Mammary epithelial cell (primary cell): ENCODE measurements at regions of chr17 and their contacts with region 1.

Region 1: GRCh38 chr17:42798383-42799380 is at the starts of genes CNTD1 and COA3:
- DNase-seq: peak; percentile 76
- H3K4me3 ChIP-seq: peak within 1 kb of the TSS; percentile 92 to 96 (median 93)
- H3K27ac ChIP-seq: no peak within 1 kb of the TSS
- H3K4me1 ChIP-seq: peaks cover 11% of the 10 kb centered on the region
- H3K27me3 ChIP-seq: no peaks in the 10 kb centered on the region
- CTCF ChIP-seq: peak in 1 of 2 donors; percentile 16
- total RNA-seq, gene CNTD1: under 0.01 TPM in 1 of 2 donors, not detected in the other
- total RNA-seq, gene COA3: 31.5 to 49.1 TPM

Region 2: GRCh38 chr17:42720996-42721583 is 77.6 kb before region 1 on chr17:
- CTCF ChIA-PET with region 1: no interaction called
- dilution Hi-C with region 1: no loop called
- in situ Hi-C with region 1: no loop called
- intact Hi-C with region 1: no loop called
- DNase-seq: peak; percentile 43
- H3K4me3 ChIP-seq: no peak overlapping the region
- H3K27ac ChIP-seq: no peak overlapping the region
- H3K4me1 ChIP-seq: no peaks in the 10 kb centered on the region
- H3K27me3 ChIP-seq: no peaks in the 10 kb centered on the region
- CTCF ChIP-seq: peak; percentile 59 to 65

Region 3: GRCh38 chr17:42773290-42774035 is 25.2 kb before region 1 on chr17 and contains the start of gene VPS25:
- CTCF ChIA-PET with region 1: no interaction called
- dilution Hi-C with region 1: no loop called
- in situ Hi-C with region 1: no loop called
- intact Hi-C with region 1: loop called (anchors 1 kb)
- DNase-seq: peak; percentile 81
- H3K4me3 ChIP-seq: peak within 1 kb of the TSS; percentile 65 to 84 (median 78)
- H3K27ac ChIP-seq: peak within 1 kb of the TSS; percentile 87
- H3K4me1 ChIP-seq: peaks cover 11% of the 10 kb centered on the region
- H3K27me3 ChIP-seq: no peaks in the 10 kb centered on the region
- CTCF ChIP-seq: peak in 1 of 2 donors; percentile 32
- total RNA-seq, gene VPS25: 58.0 to 83.6 TPM

Region 4: DNA sequence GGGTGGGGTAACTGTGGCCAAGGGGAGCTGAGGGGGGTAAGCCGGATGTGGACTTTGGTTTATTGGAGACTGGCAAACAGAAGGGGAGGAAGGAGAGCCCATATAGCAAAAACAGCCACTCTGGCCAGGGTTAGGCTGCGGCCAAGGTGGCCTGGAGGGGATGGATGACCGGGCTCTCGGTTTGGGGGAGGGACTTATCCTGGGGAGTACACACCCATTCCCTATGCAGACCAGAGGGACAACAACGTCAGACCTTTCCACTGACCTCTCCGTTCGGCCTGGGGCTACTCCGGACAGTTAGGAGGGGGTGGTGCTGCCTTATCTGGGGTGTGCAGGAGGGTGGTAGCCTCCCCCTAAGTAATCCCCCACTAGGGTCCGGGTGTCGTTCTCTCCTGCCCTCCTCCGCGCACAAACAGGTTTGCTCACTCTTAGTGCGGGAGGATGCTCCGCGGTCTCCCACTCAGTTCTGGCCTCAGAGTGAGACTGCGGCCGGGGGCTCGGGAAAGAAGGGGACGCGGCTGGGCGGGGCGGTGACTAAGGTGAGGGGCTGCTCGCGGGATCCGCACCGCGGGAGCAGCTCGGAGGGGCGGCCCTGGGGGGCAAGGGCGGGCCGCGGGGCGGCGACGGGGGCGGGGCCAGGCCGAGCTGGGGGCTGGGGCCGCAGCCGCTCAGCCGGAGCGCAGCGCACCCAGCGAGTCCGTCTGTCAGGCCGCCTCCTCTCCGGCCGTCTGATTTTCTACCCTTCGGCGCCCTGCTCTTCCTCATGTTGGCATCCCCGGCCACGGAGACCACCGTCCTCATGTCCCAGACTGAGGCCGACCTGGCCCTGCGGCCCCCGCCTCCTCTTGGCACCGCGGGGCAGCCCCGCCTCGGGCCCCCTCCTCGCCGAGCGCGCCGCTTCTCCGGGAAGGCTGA is 18.5 kb before region 1 on chr17 and contains the start of gene WNK4:
- CTCF ChIA-PET with region 1: no interaction called
- dilution Hi-C with region 1: no loop called
- in situ Hi-C with region 1: no loop called
- intact Hi-C with region 1: loop called (anchors 2 kb)
- DNase-seq: no peak
- H3K4me3 ChIP-seq: peak within 1 kb of the TSS in 1 of 3 experiments; percentile 24
- H3K27ac ChIP-seq: no peak within 1 kb of the TSS
- H3K4me1 ChIP-seq: peaks cover 24% of the 10 kb centered on the region
- H3K27me3 ChIP-seq: peaks cover 2% of the 10 kb centered on the region
- CTCF ChIP-seq: no peak
- total RNA-seq, gene WNK4: 0.75 TPM in 1 of 2 donors, not detected in the other

Region 5: DNA sequence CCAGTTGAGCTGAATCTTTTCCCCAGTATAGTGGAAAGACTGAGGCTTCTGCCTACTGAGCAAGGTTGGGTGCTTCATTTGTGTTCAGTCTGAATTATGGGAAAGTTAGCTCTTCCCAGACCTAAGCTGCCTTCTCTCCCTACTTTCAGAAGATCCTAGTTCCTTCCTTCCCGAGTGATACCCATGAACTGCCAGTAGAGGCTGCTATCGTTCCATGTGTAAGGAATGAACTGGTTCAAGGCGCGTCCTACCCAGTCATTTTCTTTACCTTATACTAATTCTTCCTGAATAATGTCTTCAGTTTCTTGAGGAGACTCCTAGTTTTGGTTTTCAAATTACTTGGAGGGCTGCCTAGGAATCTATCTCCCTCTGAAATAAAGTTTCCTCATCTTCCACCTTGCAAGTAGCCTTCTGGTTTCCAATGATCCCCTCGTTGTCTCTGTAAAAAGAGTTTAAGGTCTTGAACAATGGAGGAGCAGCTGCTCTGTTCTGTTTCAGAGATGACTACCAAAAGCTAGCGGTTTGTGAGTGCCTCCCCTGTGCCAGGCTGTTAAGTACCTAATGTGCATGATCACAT is 44.8 kb after region 1 on chr17:
- CTCF ChIA-PET with region 1: no interaction called
- dilution Hi-C with region 1: no loop called
- in situ Hi-C with region 1: no loop called
- intact Hi-C with region 1: no loop called
- DNase-seq: peak; percentile 42
- H3K4me3 ChIP-seq: no peak overlapping the region
- H3K27ac ChIP-seq: no peak overlapping the region
- H3K4me1 ChIP-seq: peaks cover 6% of the 10 kb centered on the region
- H3K27me3 ChIP-seq: no peaks in the 10 kb centered on the region
- CTCF ChIP-seq: peak; percentile 98